Brain microvascular endothelial cell (primary cell): ENCODE measurements at regions of chr9 and their contacts with region 1.

Region 1: DNA sequence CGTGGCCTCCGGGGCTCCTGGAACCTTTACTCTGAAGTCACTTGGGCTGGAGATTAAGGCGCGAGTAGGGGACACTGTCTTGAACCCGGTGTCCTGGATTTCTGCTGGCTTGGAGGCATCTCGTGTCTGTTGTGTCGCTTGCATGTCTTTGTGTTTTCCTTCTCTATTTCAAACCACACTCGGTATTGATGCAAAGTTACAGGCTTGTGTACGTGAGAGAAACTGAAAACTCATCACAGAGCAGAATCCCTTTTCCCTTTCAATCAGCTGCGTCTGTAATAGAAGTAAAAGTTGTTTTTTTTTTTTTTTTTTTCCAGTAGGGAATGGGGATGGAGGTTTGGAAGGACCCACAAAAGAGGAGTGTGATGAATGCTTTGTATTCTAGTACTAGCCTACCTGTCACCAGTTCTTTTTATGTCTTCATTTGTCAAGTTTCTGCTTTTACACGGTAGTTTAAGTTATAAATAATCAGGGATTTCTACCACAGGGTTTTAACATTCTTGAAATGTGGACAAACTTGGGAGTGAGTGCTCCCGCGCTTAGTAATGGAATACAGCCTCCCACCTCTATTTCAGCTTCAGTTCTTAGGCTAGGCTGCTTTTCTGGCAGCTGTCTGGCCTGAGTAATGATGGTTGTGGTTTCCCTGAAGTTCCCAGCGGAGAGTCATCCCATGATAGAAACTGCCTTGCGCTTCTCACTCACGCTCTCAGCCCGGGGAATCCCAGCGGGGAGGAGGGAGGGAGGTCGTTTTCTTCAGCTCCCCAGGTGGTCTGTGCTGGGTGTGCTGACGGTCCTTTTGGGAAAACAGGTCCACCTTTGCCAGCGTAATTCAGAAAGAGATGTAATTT is 763 bp downstream of the TJP2 start:
- DNase-seq: peak; percentile 97
- H3K4me3 ChIP-seq: peak overlapping the region; percentile 80
- H3K27ac ChIP-seq: peak overlapping the region; percentile 73
- H3K27me3 ChIP-seq: no peaks in the 10 kb centered on the region
- CTCF ChIP-seq: no peak

Region 2: GRCh38 chr9:69066955-69067354 is 107.9 kb before region 1 on chr9:
- in situ Hi-C with region 1: loop called (anchors 25 kb)
- DNase-seq: no peak
- H3K4me3 ChIP-seq: no peak overlapping the region
- H3K27ac ChIP-seq: no peak overlapping the region
- H3K27me3 ChIP-seq: no peaks in the 10 kb centered on the region
- CTCF ChIP-seq: no peak

Region 3: DNA sequence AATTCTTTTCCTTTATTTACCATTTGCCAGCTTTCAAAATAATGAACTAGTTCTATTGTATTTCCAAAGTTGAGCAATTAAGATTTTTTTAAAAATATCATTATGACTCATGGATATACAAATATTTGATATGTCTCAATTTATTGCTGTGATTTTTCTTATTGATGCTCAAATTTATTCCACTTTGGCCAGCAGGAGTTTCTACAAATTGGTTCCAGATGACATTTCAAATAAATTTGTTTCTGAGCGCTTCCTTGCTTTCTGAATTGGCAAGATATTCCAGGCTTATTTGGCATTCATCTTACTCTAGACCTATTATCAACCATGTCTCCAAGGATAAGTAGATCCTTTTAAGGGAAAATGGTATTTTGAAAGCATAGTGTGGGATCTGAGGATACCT is 59.2 kb before region 1 on chr9:
- in situ Hi-C with region 1: no loop called
- DNase-seq: no peak
- H3K4me3 ChIP-seq: no peak overlapping the region
- H3K27ac ChIP-seq: no peak overlapping the region
- H3K27me3 ChIP-seq: no peaks in the 10 kb centered on the region
- CTCF ChIP-seq: no peak

Region 4: GRCh38 chr9:69564557-69564956 is 389.7 kb after region 1 on chr9:
- in situ Hi-C with region 1: no loop called
- DNase-seq: no peak
- H3K4me3 ChIP-seq: no peak overlapping the region
- H3K27ac ChIP-seq: no peak overlapping the region
- H3K27me3 ChIP-seq: no peaks in the 10 kb centered on the region
- CTCF ChIP-seq: no peak